CD4-positive, alpha-beta memory T cell (primary cell): ENCODE measurements at regions of chr5 and their contacts with region 1.

Region 1: GRCh38 chr5:66144074-66144833 is at the start of gene SREK1:
- DNase-seq: peak; percentile 88 to 90 (median 89)
- H3K4me3 ChIP-seq: peak within 1 kb of the TSS; percentile 94 to 96
- H3K4me3 Mint-ChIP-seq: peak within 1 kb of the TSS; percentile 98 to 100 (median 99)
- H3K27ac ChIP-seq: peak within 1 kb of the TSS; percentile 99
- H3K27ac Mint-ChIP-seq: peak within 1 kb of the TSS; percentile 100
- H3K4me1 ChIP-seq: peaks cover 48% of the 10 kb centered on the region
- H3K4me1 Mint-ChIP-seq: peaks cover 23 to 47% (median 31%) of the 10 kb centered on the region in 4 donors
- H3K27me3 ChIP-seq: no peaks in the 10 kb centered on the region
- H3K27me3 Mint-ChIP-seq: peaks cover 0 to 2% of the 10 kb centered on the region in 2 donors
- total RNA-seq, gene SREK1: 71.0 to 73.7 TPM

Region 2: GRCh38 chr5:64768358-64769312 is 1375.6 kb before region 1 on chr5 and contains the starts of genes CWC27 and SREK1IP1:
- CTCF ChIA-PET with region 1: no interaction called
- POLR2A ChIA-PET with region 1: no interaction called
- intact Hi-C with region 1: loop called (anchors 1 kb)
- DNase-seq: peak; percentile 85 to 88 (median 85)
- H3K4me3 ChIP-seq: peak within 1 kb of the TSS; percentile 83 to 94
- H3K4me3 Mint-ChIP-seq: peak within 1 kb of the TSS; percentile 98 to 100 (median 100)
- H3K27ac ChIP-seq: peak within 1 kb of the TSS; percentile 86
- H3K27ac Mint-ChIP-seq: peak within 1 kb of the TSS; percentile 95 to 100 (median 98)
- H3K4me1 ChIP-seq: peaks cover 47% of the 10 kb centered on the region
- H3K4me1 Mint-ChIP-seq: peaks cover 49 to 82% (median 57%) of the 10 kb centered on the region in 4 donors
- H3K27me3 ChIP-seq: no peaks in the 10 kb centered on the region
- H3K27me3 Mint-ChIP-seq: no peaks in the 10 kb centered on the region
- total RNA-seq, gene CWC27: 16.8 to 17.8 TPM
- total RNA-seq, gene SREK1IP1: 18.4 to 20.2 TPM

Region 3: DNA sequence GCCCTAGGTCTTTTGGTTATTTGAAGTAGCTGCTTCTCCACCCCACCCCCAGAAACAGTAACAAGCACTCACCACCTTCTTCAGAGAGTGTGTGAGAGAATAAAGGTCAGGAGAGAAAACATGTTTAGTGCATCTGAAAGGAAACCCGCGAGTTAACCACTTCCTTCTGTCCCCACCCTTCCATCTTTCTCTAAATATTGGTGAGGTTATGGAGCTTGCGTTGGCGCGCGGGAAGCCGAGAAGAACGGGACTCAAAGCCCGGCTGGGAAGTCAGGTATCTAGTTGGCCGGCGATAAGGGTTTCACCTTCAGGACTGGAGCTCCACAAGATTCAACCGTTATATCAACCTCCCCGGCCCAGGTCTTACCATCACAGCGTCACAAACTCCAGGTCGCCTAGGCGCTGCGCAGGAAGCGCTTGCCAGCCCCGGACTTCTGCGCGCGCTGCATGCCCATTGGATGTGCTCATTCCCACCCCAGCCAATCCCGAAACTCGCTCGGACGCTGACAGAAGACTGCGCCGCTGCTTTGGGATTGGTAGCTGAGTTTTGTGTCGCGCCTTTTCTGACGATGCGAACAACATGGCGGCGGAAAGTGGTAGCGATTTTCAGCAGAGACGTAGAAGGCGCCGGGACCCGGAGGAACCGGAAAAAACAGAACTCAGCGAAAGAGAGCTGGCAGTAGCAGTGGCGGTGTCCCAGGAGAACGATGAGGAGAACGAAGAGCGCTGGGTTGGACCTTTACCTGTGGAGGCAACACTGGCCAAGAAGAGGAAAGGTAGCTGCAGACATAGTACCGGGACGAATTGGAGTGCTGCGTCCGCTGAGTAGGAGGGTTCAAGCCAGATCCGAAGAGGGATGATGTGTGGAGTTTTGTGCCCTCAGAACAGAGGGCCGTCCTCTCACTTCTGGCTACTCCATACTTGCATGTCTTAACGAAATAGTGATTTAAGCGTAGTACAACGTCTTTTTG is 581.2 kb before region 1 on chr5 and contains the starts of genes CENPK and PPWD1:
- CTCF ChIA-PET with region 1: no interaction called
- POLR2A ChIA-PET with region 1: interaction called, 15 read pairs
- intact Hi-C with region 1: loop called (anchors 1 kb)
- DNase-seq: peak; percentile 93 to 97 (median 96)
- H3K4me3 ChIP-seq: peak within 1 kb of the TSS; percentile 73 to 80
- H3K4me3 Mint-ChIP-seq: peak within 1 kb of the TSS; percentile 98 to 99 (median 98)
- H3K27ac ChIP-seq: peak within 1 kb of the TSS; percentile 92
- H3K27ac Mint-ChIP-seq: peak within 1 kb of the TSS; percentile 96 to 99 (median 99)
- H3K4me1 ChIP-seq: peaks cover 54% of the 10 kb centered on the region
- H3K4me1 Mint-ChIP-seq: peaks cover 32 to 58% (median 41%) of the 10 kb centered on the region in 4 donors
- H3K27me3 ChIP-seq: no peaks in the 10 kb centered on the region
- H3K27me3 Mint-ChIP-seq: no peaks in the 10 kb centered on the region
- total RNA-seq, gene CENPK: 13.6 to 15.4 TPM
- total RNA-seq, gene PPWD1: 102 to 104 TPM

Region 4: GRCh38 chr5:65721720-65722574 is 422.3 kb before region 1 on chr5 and contains the starts of genes NLN and SGTB:
- CTCF ChIA-PET with region 1: no interaction called
- POLR2A ChIA-PET with region 1: interaction called, 11 read pairs
- intact Hi-C with region 1: loop called (anchors 2 kb)
- DNase-seq: peak; percentile 78 to 86 (median 82)
- H3K4me3 ChIP-seq: peak within 1 kb of the TSS; percentile 57 to 64
- H3K4me3 Mint-ChIP-seq: peak within 1 kb of the TSS; percentile 88 to 98 (median 94)
- H3K27ac ChIP-seq: peak within 1 kb of the TSS; percentile 91
- H3K27ac Mint-ChIP-seq: peak within 1 kb of the TSS in 6 of 7 donors; percentile 75 to 93 (median 90)
- H3K4me1 ChIP-seq: peaks cover 46% of the 10 kb centered on the region
- H3K4me1 Mint-ChIP-seq: peaks cover 9 to 22% (median 14%) of the 10 kb centered on the region in 4 donors
- H3K27me3 ChIP-seq: no peaks in the 10 kb centered on the region
- H3K27me3 Mint-ChIP-seq: no peaks in the 10 kb centered on the region
- total RNA-seq, gene NLN: 2.3 to 2.4 TPM
- total RNA-seq, gene SGTB: 42.6 to 46.5 TPM

Region 5: DNA sequence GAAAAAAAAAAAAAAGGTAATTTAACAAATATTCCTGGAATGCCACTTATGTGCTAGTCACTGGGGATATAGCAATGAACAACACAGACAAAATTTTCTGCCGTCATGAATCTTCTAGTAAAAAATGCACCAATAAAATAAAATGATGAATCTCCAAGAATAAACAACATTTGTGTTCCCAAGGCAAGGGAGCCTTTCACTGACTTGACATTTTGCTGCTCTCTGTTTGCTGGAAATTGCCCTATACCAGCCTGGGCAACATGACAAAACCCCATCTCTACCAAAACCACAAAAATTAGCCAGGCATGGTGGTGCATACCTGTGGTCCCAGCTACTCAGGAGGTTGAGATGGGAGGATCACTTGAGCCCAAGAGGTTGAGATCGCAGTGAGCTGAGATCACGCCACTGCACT is 282.4 kb before region 1 on chr5:
- CTCF ChIA-PET with region 1: no interaction called
- POLR2A ChIA-PET with region 1: interaction called, 7 read pairs
- intact Hi-C with region 1: loop called (anchors 10 kb)
- DNase-seq: no peak
- H3K4me3 ChIP-seq: no peak overlapping the region
- H3K4me3 Mint-ChIP-seq: no peak overlapping the region
- H3K27ac ChIP-seq: no peak overlapping the region
- H3K27ac Mint-ChIP-seq: no peak overlapping the region
- H3K4me1 ChIP-seq: peaks cover 10% of the 10 kb centered on the region
- H3K4me1 Mint-ChIP-seq: peaks cover 11 to 18% (median 14%) of the 10 kb centered on the region in 4 donors
- H3K27me3 ChIP-seq: no peaks in the 10 kb centered on the region
- H3K27me3 Mint-ChIP-seq: peaks cover 0 to 5% of the 10 kb centered on the region in 2 donors

Region 6: GRCh38 chr5:66041627-66042026 is 102.6 kb before region 1 on chr5:
- CTCF ChIA-PET with region 1: no interaction called
- POLR2A ChIA-PET with region 1: no interaction called
- intact Hi-C with region 1: no loop called
- DNase-seq: no peak
- H3K4me3 ChIP-seq: no peak overlapping the region
- H3K4me3 Mint-ChIP-seq: no peak overlapping the region
- H3K27ac ChIP-seq: no peak overlapping the region
- H3K27ac Mint-ChIP-seq: peak overlapping the region in 1 of 7 donors; percentile 10
- H3K4me1 ChIP-seq: no peaks in the 10 kb centered on the region
- H3K4me1 Mint-ChIP-seq: peaks cover 11 to 20% (median 13%) of the 10 kb centered on the region in 4 donors
- H3K27me3 ChIP-seq: no peaks in the 10 kb centered on the region
- H3K27me3 Mint-ChIP-seq: peaks cover 0 to 2% of the 10 kb centered on the region in 2 donors

Region 7: DNA sequence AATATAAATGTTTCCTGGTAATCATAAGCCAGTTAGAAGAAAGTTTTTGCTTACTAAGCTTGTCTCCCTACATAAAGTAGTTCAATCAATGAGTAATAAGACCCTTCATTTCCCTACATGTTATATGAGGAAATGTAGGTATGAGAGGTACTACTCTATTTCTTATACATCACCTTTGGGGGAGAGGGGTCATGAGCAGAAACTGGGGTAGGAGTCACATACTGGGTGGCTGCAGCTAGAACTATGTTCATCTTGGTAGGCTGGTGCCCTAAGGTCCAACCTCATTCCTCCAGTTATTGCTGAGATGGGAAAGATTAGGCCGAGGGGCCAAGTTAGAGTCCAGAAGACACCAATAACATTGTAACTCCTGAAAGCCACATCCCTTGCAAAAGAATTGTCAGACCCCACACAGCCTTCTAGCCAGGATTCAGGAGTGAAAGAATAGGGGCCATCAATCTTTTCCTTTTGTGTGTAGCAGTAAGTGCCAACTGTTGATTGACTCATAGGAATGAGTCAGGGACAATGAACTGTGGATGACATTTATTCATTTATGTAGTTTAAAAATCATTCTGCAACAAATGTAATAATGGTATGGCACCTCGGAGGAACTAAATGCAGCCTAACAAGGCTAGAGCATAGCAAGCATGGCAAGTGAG is 21.7 kb before region 1 on chr5:
- CTCF ChIA-PET with region 1: no interaction called
- POLR2A ChIA-PET with region 1: no interaction called
- intact Hi-C with region 1: no loop called
- DNase-seq: no peak
- H3K4me3 ChIP-seq: no peak overlapping the region
- H3K4me3 Mint-ChIP-seq: no peak overlapping the region
- H3K27ac ChIP-seq: no peak overlapping the region
- H3K27ac Mint-ChIP-seq: no peak overlapping the region
- H3K4me1 ChIP-seq: no peaks in the 10 kb centered on the region
- H3K4me1 Mint-ChIP-seq: no peaks in the 10 kb centered on the region
- H3K27me3 ChIP-seq: no peaks in the 10 kb centered on the region
- H3K27me3 Mint-ChIP-seq: peaks cover 2 to 3% of the 10 kb centered on the region in 2 donors

Region 8: DNA sequence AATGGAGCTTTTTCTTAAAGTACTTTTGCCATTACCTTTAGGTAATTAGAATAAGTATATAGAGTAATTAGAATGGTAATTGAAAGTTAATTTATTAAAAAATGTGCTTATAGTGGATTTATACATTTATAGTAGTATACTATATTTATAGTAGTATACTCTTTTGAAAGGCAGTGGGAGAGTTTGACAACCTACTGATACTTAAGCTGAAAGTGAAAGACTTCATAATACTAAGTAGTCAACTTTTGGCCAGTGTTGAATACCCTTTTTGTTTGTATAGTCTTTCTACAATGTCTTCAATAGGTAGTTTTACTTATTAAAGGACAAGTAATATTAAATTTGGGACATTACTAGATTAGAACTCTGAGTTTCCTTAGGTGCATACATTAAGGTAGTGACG is 12.8 kb after region 1 on chr5:
- CTCF ChIA-PET with region 1: no interaction called
- POLR2A ChIA-PET with region 1: interaction called, 16 read pairs
- intact Hi-C with region 1: no loop called
- DNase-seq: no peak
- H3K4me3 ChIP-seq: no peak overlapping the region
- H3K4me3 Mint-ChIP-seq: no peak overlapping the region
- H3K27ac ChIP-seq: no peak overlapping the region
- H3K27ac Mint-ChIP-seq: no peak overlapping the region
- H3K4me1 ChIP-seq: peaks cover 6% of the 10 kb centered on the region
- H3K4me1 Mint-ChIP-seq: peaks cover 5 to 19% (median 12%) of the 10 kb centered on the region in 4 donors
- H3K27me3 ChIP-seq: no peaks in the 10 kb centered on the region
- H3K27me3 Mint-ChIP-seq: no peaks in the 10 kb centered on the region